ENCODE measurements at regions of chr7 and their contacts with region 1.

Region 1: GRCh38 chr7:44534501-44534900 is 6.6 kb downstream of the NPC1L1 start:
- DNase-seq: peak; percentile 75
- ATAC-seq: peak; percentile 99
- H3K4me3 Mint-ChIP-seq: no peak overlapping the region
- H3K27ac Mint-ChIP-seq: no peak overlapping the region
- H3K4me1 Mint-ChIP-seq: no peaks in the 10 kb centered on the region
- H3K27me3 Mint-ChIP-seq: no peaks in the 10 kb centered on the region

Region 2: GRCh38 chr7:44293561-44294324 is 240.8 kb before region 1 on chr7:
- CTCF ChIA-PET with region 1: no interaction called
- POLR2A ChIA-PET with region 1: no interaction called
- intact Hi-C with region 1: no loop called
- DNase-seq: peak; percentile 1
- ATAC-seq: no peak
- H3K4me3 Mint-ChIP-seq: no peak overlapping the region
- H3K27ac Mint-ChIP-seq: no peak overlapping the region
- H3K4me1 Mint-ChIP-seq: no peaks in the 10 kb centered on the region
- H3K27me3 Mint-ChIP-seq: peaks cover 26% of the 10 kb centered on the region

Region 3: GRCh38 chr7:44388089-44388970 is 146.2 kb before region 1 on chr7:
- CTCF ChIA-PET with region 1: no interaction called
- POLR2A ChIA-PET with region 1: no interaction called
- intact Hi-C with region 1: no loop called
- DNase-seq: no peak
- ATAC-seq: no peak
- H3K4me3 Mint-ChIP-seq: no peak overlapping the region
- H3K27ac Mint-ChIP-seq: no peak overlapping the region
- H3K4me1 Mint-ChIP-seq: no peaks in the 10 kb centered on the region
- H3K27me3 Mint-ChIP-seq: no peaks in the 10 kb centered on the region

Region 4: DNA sequence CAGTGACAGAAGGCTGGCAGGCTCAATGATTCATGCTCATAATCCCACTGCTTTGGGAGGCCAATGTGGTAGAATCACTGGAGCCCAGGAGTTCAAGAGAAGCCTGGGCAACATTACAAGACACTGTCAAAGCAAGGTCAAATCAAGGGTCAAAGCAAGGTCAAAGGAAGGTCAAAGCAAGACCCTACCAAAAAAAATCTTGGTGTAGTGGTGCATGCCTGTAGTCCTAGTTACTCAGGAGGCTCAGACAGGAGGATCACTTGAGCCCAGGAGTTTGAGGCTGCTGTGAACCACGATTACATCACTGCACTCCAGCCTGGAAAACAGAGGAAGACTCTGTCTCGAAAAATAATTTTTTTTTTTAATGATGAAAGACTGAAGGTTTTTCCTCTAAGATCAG is 20.9 kb after region 1 on chr7:
- CTCF ChIA-PET with region 1: interaction called, 10 read pairs
- POLR2A ChIA-PET with region 1: interaction called, 8 read pairs
- intact Hi-C with region 1: no loop called
- DNase-seq: no peak
- ATAC-seq: no peak
- H3K4me3 Mint-ChIP-seq: no peak overlapping the region
- H3K27ac Mint-ChIP-seq: no peak overlapping the region
- H3K4me1 Mint-ChIP-seq: no peaks in the 10 kb centered on the region
- H3K27me3 Mint-ChIP-seq: no peaks in the 10 kb centered on the region

Region 5: DNA sequence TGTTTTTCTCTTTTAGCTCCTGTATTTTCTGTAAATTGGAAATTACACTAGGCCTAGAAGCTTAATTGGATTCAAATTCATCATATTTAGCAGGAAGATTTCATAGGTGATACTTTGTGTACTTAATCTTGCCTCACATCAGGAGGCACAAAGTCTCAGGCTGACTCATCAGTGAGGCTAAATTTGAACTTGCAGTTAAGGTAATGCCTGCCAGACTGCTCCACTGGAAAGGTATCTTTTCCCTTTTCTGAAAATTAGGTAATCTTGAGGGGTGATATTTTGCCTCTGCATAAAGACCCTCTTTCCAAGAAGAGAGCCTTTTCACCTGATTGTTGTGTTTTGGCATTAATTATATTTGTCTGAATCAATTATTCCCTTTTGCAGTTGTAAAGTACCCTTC is 276.6 kb after region 1 on chr7:
- CTCF ChIA-PET with region 1: no interaction called
- POLR2A ChIA-PET with region 1: no interaction called
- intact Hi-C with region 1: no loop called
- DNase-seq: no peak
- ATAC-seq: peak; percentile 30
- H3K4me3 Mint-ChIP-seq: no peak overlapping the region
- H3K27ac Mint-ChIP-seq: no peak overlapping the region
- H3K4me1 Mint-ChIP-seq: peaks cover 2% of the 10 kb centered on the region
- H3K27me3 Mint-ChIP-seq: no peaks in the 10 kb centered on the region